ENCODE measurements at regions of chr14 and their contacts with region 1.

Region 1: GRCh38 chr14:23120541-23121251 is 1.6 kb upstream of the CEBPE start:
- DNase-seq: peak; percentile 90
- ATAC-seq: peak; percentile 88
- H3K4me3 Mint-ChIP-seq: no peak overlapping the region
- H3K27ac Mint-ChIP-seq: peak overlapping the region; percentile 84
- H3K4me1 Mint-ChIP-seq: peaks cover 43% of the 10 kb centered on the region
- H3K27me3 Mint-ChIP-seq: no peaks in the 10 kb centered on the region
- CTCF ChIP-seq: peak; percentile 100

Region 2: DNA sequence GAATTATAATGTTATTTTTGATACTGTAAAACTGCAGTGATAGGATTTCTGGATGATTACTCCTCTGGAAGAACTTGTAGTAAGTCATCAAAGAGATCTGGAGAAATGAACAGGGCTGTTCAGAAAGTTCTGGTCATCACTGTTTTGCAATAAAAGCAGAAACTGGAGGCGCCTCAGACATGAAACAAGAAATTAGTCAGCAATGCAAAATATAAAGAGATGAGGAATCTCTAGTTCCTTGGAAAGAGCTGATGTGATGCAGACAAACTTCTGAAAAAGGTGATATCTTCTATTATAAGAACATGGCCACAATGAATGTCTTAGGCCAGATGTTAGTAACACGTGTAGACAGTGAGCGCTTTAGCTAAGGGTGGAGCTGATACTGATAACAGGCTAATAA is 35.2 kb before region 1 on chr14:
- CTCF ChIA-PET with region 1: interaction called, 12 read pairs
- POLR2A ChIA-PET with region 1: no interaction called
- intact Hi-C with region 1: no loop called
- DNase-seq: no peak
- ATAC-seq: peak; percentile 30
- H3K4me3 Mint-ChIP-seq: no peak overlapping the region
- H3K27ac Mint-ChIP-seq: peak overlapping the region; percentile 75
- H3K4me1 Mint-ChIP-seq: peaks cover 32% of the 10 kb centered on the region
- H3K27me3 Mint-ChIP-seq: no peaks in the 10 kb centered on the region
- CTCF ChIP-seq: no peak

Region 3: DNA sequence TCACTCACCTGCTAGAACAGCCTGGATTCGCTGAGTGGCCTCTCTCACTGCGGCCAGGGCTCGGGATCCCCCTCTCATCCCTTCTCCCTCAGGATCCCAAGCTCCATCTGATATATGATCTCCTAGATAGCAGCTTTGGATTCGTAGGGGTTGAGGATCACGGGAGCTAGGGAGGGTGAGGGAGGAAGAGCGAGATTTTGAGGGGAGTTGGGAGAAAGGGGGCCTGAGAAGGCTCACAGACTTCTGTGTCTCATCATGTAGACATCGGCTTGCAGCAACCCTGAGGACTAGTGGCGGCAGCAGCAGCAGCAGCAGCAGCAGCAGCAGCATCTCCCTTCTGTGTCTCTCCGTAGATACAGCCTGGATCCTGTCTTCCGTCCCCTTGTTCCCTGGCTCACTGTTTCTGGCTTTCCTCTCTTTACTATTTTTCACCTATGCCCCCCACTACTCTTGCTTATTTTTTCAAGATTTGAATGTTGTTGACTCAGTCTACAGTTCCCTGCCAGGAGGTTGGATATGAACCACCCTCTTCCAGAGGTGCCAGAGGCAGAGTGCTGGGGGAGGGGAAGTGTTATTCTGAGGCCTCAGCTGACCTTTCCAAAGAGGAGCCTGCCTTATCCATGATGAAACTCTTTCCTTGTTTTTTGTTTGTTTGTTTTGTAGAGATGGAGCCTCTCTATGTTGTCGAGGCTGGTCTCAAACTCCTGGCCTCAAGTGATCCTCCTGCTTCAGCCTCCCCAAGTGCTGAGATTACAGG is 15.9 kb before region 1 on chr14 and contains the start of gene CIROP:
- CTCF ChIA-PET with region 1: interaction called, 41 read pairs
- POLR2A ChIA-PET with region 1: no interaction called
- intact Hi-C with region 1: no loop called
- DNase-seq: no peak
- ATAC-seq: no peak
- H3K4me3 Mint-ChIP-seq: no peak within 1 kb of the TSS
- H3K27ac Mint-ChIP-seq: no peak within 1 kb of the TSS
- H3K4me1 Mint-ChIP-seq: no peaks in the 10 kb centered on the region
- H3K27me3 Mint-ChIP-seq: no peaks in the 10 kb centered on the region
- CTCF ChIP-seq: no peak
- total RNA-seq, gene CIROP: not detected

Region 4: DNA sequence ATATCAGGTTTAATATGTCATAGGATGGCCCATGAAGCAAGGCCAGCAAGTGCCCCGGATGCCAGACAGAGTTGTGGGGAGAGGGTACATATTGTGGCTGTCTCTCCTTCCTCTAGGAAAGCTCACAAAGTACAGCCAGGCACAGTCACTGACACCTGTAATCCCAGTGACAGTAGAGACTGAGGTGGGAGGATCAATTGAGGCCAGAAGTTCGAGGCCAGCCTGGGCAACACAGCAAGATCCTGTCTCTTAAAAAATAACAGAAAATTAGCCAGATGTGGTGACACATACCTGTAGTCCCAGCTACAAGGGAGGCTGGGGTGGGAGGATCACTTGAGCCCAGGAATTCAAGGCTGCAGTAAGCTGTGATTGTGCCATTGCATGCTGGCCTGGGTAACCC is 30.6 kb after region 1 on chr14:
- CTCF ChIA-PET with region 1: interaction called, 12 read pairs
- POLR2A ChIA-PET with region 1: no interaction called
- intact Hi-C with region 1: no loop called
- DNase-seq: no peak
- ATAC-seq: no peak
- H3K4me3 Mint-ChIP-seq: no peak overlapping the region
- H3K27ac Mint-ChIP-seq: no peak overlapping the region
- H3K4me1 Mint-ChIP-seq: peaks cover 13% of the 10 kb centered on the region
- H3K27me3 Mint-ChIP-seq: peaks cover 3% of the 10 kb centered on the region
- CTCF ChIP-seq: no peak

Region 5: GRCh38 chr14:23174276-23175184 is 53.8 kb after region 1 on chr14:
- CTCF ChIA-PET with region 1: interaction called, 74 read pairs
- POLR2A ChIA-PET with region 1: no interaction called
- intact Hi-C with region 1: no loop called
- DNase-seq: no peak
- ATAC-seq: no peak
- H3K4me3 Mint-ChIP-seq: no peak overlapping the region
- H3K27ac Mint-ChIP-seq: no peak overlapping the region
- H3K4me1 Mint-ChIP-seq: peaks cover 30% of the 10 kb centered on the region
- H3K27me3 Mint-ChIP-seq: peaks cover 3% of the 10 kb centered on the region
- CTCF ChIP-seq: no peak

Region 6: DNA sequence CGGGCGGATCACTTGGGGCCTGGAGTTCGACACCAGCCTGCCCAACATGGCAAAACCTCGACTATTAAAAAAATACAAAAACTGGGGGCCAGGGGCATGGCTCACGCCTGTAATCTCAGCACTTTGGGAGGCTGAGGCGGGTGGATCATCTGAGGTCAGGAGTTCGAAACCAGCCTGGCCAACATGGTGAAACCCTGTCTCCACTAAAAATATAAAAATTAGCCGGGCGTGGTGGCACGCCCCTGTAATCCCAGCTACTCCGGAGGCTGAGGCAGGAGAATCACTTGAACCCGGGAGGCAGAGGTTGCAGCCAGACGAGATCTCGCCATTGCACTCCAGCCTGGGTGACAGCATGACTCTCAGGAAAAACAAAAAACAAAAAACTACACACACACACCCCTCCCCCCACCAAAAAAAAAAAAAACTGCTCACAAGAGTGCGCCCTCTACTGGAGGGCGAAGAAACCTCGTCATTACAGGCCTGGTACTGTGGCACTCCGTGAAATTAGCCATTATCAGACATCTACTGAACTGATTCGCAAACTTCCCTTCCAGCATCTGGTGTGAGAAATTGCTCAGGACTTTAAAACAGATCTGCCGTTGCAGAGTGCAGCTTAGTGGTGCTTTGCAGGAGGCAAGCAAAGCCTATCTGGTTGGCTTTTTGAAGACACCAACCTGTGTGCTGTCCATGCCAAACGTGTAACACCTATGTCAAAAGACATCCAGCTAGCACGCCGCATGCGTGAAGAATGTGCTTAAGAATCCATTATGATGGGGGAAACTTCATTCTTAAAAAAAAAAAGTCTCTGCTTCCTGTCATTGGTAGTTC is 174.3 kb after region 1 on chr14:
- CTCF ChIA-PET with region 1: interaction called, 14 read pairs
- POLR2A ChIA-PET with region 1: interaction called, 5 read pairs
- intact Hi-C with region 1: loop called (anchors 5 kb)
- DNase-seq: peak; percentile 68
- ATAC-seq: peak; percentile 94
- H3K4me3 Mint-ChIP-seq: no peak overlapping the region
- H3K27ac Mint-ChIP-seq: peak overlapping the region; percentile 0
- H3K4me1 Mint-ChIP-seq: peaks cover 19% of the 10 kb centered on the region
- H3K27me3 Mint-ChIP-seq: no peaks in the 10 kb centered on the region
- CTCF ChIP-seq: peak; percentile 83

Region 7: GRCh38 chr14:23379366-23380196 is 258.9 kb after region 1 on chr14:
- CTCF ChIA-PET with region 1: interaction called, 21 read pairs
- POLR2A ChIA-PET with region 1: no interaction called
- intact Hi-C with region 1: no loop called
- DNase-seq: peak; percentile 67
- ATAC-seq: peak; percentile 93
- H3K4me3 Mint-ChIP-seq: no peak overlapping the region
- H3K27ac Mint-ChIP-seq: no peak overlapping the region
- H3K4me1 Mint-ChIP-seq: no peaks in the 10 kb centered on the region
- H3K27me3 Mint-ChIP-seq: no peaks in the 10 kb centered on the region
- CTCF ChIP-seq: peak; percentile 91